AG04449 (cell line): ENCODE measurements at regions of chr15 and their contacts with region 1.

Region 1: DNA sequence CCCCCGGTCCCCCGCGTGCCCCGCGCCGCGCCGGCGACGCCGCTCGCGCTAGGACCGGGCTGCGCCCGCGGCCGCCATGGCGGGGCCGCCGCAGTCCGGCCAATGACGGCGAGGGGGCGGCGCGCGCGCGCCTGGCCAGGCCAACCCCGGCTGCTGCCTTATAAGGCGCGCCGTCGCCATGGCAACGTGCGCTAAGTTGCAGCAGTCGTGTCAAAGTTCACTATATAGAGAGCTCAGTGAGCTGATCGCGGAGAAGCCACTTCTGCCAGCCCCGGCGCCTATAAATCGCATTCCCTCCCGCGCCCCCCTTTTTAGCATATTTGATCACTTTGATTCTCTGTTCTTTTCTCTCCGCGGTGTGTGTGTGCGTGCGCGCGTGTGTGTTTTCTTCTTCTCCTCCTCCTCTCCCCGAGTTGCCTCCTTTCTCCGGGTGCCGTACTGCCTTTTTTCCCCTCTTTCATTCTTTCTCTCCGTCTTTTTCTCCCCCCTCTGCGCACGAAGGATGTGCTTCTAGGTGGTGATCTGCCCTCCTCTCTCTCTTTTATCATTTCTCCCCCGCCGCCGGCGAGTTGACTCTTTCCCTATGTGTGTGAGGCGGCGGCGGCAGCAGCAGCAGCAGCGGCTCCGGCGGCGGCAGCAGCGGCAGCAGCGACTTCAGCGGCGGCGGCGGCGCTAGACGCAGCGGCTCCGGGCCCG is at the start of gene NR2F2:
- DNase-seq: peak; percentile 94
- H3K4me3 ChIP-seq: peak within 1 kb of the TSS; percentile 96
- CTCF ChIP-seq: no peak

Region 2: GRCh38 chr15:96047255-96047931 is 283.2 kb before region 1 on chr15:
- CTCF ChIA-PET with region 1: interaction called, 11 read pairs
- POLR2A ChIA-PET with region 1: interaction called, 6 read pairs
- DNase-seq: peak; percentile 81
- H3K4me3 ChIP-seq: peak overlapping the region; percentile 27
- CTCF ChIP-seq: no peak

Region 3: GRCh38 chr15:96273317-96274086 is 57.1 kb before region 1 on chr15:
- CTCF ChIA-PET with region 1: interaction called, 22 read pairs
- POLR2A ChIA-PET with region 1: interaction called, 9 read pairs
- DNase-seq: peak; percentile 92
- H3K4me3 ChIP-seq: no peak overlapping the region
- CTCF ChIP-seq: no peak

Region 4: GRCh38 chr15:96345560-96346399 is 15.2 kb after region 1 on chr15:
- CTCF ChIA-PET with region 1: interaction called, 45 read pairs
- POLR2A ChIA-PET with region 1: interaction called, 15 read pairs
- DNase-seq: no peak
- H3K4me3 ChIP-seq: peak overlapping the region; percentile 36
- CTCF ChIP-seq: peak; percentile 64

Region 5: DNA sequence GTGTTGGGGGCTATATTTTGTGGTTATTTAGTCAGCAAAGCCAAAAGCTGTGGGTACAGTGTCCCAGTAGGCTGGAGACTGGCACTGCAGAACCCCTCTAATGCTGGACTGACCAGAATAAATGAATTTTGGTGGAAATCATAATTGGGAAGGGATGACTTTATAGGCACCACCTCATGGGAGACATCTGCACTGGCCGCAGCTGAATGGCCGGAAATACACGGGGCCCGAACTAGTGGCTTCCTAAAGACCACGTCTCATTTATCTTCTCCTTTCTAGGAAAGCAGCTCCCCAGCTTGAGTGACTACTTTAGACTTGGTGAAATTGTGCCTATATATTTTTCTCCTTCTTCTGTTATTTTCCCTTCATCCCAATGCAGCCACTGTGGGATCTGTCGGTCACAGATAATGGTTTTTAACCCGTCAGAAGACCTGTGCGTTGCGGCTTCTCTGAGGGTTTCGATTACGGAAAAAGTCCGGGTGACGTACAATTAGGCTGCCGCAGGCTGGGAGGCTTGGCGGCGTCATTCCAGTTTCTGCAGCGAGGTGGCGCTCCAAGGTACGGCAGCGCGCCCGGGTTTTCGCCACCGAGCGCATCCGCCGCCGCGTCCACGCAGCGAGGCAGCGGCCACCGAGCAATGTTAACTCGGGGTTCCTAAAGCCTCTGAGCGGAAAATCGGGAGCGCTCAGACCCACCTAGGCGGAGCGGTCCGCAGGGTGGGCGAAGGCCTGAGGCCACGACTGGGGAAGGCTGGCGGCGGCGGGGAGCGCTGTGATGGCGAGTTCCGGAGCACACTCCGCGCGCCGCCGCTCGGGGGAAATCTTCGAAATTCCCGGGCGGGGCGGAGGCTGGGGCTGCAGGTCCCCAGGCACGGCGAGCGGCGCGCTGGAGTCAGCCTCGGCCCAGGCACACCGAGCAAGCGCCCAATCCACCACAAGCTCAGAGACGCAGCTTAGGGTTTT is 26.2 kb after region 1 on chr15:
- CTCF ChIA-PET with region 1: interaction called, 56 read pairs
- POLR2A ChIA-PET with region 1: interaction called, 7 read pairs
- DNase-seq: no peak
- H3K4me3 ChIP-seq: peak overlapping the region; percentile 78
- CTCF ChIP-seq: peak; percentile 95

Region 6: DNA sequence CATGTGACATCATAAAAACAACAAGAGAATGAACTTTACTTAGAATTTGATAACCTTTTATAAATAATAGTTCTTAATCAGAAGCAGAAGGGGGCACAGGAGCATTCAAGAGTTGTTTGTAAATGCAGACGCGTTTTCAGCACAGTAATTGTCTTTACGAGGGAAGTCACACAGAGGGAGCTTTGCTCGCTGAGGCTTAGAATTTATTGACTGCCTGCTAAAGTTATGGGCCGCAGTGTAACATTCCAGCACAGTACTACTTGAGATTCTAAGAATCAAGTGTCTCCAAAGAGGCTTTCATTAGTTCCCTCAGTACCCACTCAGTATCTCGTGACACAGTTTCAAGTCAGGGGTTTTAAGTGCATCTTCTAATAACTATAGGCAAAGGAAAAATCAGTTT is 288.6 kb after region 1 on chr15:
- CTCF ChIA-PET with region 1: no interaction called
- POLR2A ChIA-PET with region 1: no interaction called
- DNase-seq: no peak
- H3K4me3 ChIP-seq: no peak overlapping the region
- CTCF ChIP-seq: no peak

Region 7: DNA sequence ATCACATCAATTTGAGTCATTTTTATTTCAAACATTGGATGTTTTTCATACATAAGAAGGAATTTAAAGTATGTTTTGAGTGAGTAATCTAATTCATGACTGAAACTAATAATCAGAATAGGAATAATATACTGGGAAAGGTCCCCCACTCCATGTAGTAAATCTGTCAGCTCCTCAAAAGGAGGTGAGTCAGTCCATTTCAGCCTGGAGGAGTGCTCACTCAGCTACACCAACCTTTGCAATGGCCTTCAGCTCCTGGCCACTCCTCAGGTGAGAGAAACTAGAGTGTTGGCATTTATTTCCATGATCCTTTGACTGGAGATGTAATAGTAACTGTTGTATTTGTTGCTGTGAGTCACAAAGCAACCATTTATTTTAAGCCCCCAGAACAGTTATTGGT is 885.0 kb after region 1 on chr15:
- CTCF ChIA-PET with region 1: no interaction called
- POLR2A ChIA-PET with region 1: no interaction called
- DNase-seq: no peak
- H3K4me3 ChIP-seq: no peak overlapping the region
- CTCF ChIP-seq: no peak

Region 8: DNA sequence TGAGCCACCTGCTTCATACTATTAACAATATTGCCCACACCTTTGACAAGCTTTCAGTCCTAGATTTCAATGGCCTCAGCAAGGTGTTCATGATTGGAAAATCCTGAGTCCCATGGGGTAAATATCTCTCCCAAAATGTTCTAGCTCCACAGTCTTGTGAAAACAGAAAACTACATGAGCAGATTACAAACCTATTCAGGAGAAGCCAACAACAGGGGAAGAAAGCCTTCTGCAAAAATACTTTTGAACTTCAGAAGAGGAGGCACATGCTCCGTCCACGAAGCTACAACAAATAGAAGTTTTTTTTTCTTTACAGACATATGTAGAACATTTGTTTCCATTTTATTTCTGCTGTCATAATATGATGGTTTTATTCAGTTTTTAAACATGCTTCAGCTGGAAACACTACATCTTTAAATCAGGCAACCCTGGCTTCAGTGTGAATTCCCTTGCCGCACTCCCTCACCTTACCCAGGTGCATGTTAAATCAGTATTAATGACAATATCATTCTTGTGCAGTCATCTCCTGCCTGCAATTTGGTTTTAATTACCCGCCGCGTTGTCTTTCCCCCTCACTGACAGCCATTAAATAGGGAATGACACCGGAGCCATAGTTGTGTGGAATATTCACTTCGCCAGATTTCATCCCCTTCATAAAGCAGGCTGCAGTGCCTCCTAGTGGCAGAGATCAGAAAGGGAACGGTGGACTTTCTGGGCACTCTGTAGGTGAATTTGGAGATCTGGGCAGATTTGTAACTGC is 904.4 kb after region 1 on chr15:
- CTCF ChIA-PET with region 1: interaction called, 19 read pairs
- POLR2A ChIA-PET with region 1: no interaction called
- DNase-seq: no peak
- H3K4me3 ChIP-seq: no peak overlapping the region
- CTCF ChIP-seq: peak; percentile 60